ENCODE measurements at regions of chr2 and their contacts with region 1.

Region 1: GRCh38 chr2:73112913-73113633 is at the start of gene RAB11FIP5:
- DNase-seq: peak; percentile 57
- ATAC-seq: peak; percentile 82
- H3K4me3 ChIP-seq: peak within 1 kb of the TSS; percentile 64 to 92 (median 85)
- H3K27ac ChIP-seq: peak within 1 kb of the TSS; percentile 54
- H3K4me1 ChIP-seq: peaks cover 51% of the 10 kb centered on the region
- H3K27me3 ChIP-seq: no peaks in the 10 kb centered on the region; a peak in 2 of 5 replicates
- CTCF ChIP-seq: peak; percentile 26
- EP300 ChIP-seq: no peak
- POLR2A ChIP-seq: peak; percentile 59 to 66; a peak in 3 of 4 replicates
- RAD21 ChIP-seq: peak; percentile 47
- total RNA-seq, gene RAB11FIP5: 8.7 and 9.4 TPM in 2 replicates

Region 2: DNA sequence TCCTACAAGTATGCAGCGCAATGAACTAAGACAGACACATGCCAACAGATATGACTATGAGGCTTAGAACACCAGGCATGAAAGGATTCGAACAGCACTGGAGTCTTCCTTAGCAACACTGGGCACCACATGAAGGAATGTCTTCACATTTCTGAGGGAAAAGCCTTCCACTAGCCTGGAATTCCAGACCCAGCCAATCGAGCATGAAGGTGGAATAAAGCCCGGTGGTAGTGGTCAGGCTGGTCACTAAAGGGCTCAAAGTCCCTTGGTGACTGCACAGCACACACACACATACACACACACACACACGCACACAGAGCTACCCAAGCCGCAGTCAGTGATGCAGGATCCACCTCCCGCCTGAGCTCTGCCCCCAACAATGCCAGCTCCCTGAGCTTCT is 21.9 kb before region 1 on chr2:
- CTCF ChIA-PET with region 1: no interaction called
- POLR2A ChIA-PET with region 1: interaction called, 17 read pairs
- in situ Hi-C with region 1: no loop called
- intact Hi-C with region 1: loop called (anchors 2 kb)
- DNase-seq: peak; percentile 84
- ATAC-seq: peak; percentile 68
- H3K4me3 ChIP-seq: no peak overlapping the region
- H3K27ac ChIP-seq: no peak overlapping the region
- H3K4me1 ChIP-seq: peaks cover 51% of the 10 kb centered on the region
- H3K27me3 ChIP-seq: no peaks in the 10 kb centered on the region
- CTCF ChIP-seq: 0 out of 2 replicates have a peak, but pooled peaks have one; percentile 7
- EP300 ChIP-seq: peak; percentile 35 to 40; a peak in 1 of 4 replicates
- POLR2A ChIP-seq: no peak
- RAD21 ChIP-seq: no peak; the same call in 1 of the 2 replicates

Measured in HepG2 (cell line).